PC-9 (cell line): ENCODE measurements at regions of chr14 and their contacts with region 1.

Region 1: GRCh38 chr14:80784820-80785219 is 156.7 kb downstream of the CEP128 start:
- DNase-seq: no peak
- H3K4me3 ChIP-seq: no peak overlapping the region
- H3K27ac ChIP-seq: no peak overlapping the region
- H3K4me1 ChIP-seq: no peaks in the 10 kb centered on the region
- H3K27me3 ChIP-seq: no peaks in the 10 kb centered on the region
- CTCF ChIP-seq: 0 out of 2 replicates have a peak, but pooled peaks have one; percentile 22

Region 2: DNA sequence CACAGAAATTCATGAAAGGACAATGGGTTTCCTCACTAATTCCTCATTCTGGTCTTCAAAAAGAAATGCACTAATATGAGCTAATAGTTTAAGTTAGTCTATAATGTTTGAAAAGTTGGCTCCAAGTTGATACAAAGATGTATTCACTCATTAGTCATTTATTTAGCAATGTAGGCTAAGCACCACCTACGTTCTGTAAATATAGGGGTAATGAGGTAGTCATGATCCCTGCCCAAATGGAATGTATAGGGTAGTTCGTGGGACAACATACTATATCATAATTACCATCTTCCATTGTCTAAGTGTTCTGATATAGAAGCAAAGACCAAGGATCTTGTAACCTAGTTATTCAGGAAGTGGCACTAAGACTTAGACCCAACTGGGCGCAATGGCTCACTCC is 660.0 kb before region 1 on chr14:
- CTCF ChIA-PET with region 1: no interaction called
- POLR2A ChIA-PET with region 1: interaction called, 10 read pairs
- intact Hi-C with region 1: no loop called
- DNase-seq: no peak
- H3K4me3 ChIP-seq: no peak overlapping the region
- H3K27ac ChIP-seq: no peak overlapping the region
- H3K4me1 ChIP-seq: no peaks in the 10 kb centered on the region
- H3K27me3 ChIP-seq: no peaks in the 10 kb centered on the region
- CTCF ChIP-seq: no peak

Region 3: GRCh38 chr14:80560800-80561657 is 223.8 kb before region 1 on chr14:
- CTCF ChIA-PET with region 1: no interaction called
- POLR2A ChIA-PET with region 1: no interaction called
- intact Hi-C with region 1: no loop called
- DNase-seq: no peak
- H3K4me3 ChIP-seq: no peak overlapping the region
- H3K27ac ChIP-seq: no peak overlapping the region
- H3K4me1 ChIP-seq: peaks cover 8% of the 10 kb centered on the region; the same call in 1 of the 2 replicates
- H3K27me3 ChIP-seq: no peaks in the 10 kb centered on the region
- CTCF ChIP-seq: no peak

Region 4: DNA sequence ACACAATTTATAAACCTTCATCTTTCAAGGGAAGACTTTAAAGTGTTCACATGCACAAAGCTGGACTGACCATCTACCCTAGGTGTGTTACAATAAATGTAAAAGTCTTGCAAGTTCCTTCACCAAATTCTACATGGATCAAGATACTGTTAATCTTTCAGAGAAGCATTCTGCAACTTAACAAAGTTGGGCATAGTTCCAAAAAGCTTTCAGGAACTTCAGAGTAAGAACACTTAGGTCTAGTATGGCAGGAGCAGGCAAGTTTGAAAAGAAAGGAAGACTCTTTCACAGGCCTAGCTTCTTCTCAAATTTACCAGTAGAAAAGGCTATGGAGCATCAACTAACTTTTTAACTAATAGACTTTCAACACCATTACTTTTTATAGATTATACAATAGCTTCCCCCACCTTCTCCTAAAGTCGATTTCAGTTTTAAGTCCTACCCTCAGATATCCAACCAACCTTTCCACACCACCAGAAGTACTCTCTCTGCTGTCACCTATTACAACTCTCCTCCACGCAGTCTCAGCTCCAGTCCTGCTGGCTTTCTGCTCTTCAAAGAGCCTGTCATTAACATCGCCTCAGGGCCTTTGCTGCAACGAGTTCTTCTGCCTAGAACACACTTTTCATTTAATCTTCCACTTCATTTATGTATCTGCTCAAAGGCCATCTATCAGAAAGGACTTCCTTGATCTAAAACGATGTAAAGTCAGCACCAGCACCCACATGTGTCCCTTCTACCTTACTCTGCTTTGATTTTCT is 177.2 kb before region 1 on chr14:
- CTCF ChIA-PET with region 1: no interaction called
- POLR2A ChIA-PET with region 1: no interaction called
- intact Hi-C with region 1: no loop called
- DNase-seq: no peak
- H3K4me3 ChIP-seq: no peak overlapping the region
- H3K27ac ChIP-seq: no peak overlapping the region
- H3K4me1 ChIP-seq: peaks cover 8% of the 10 kb centered on the region
- H3K27me3 ChIP-seq: no peaks in the 10 kb centered on the region
- CTCF ChIP-seq: no peak

Region 5: GRCh38 chr14:80718940-80719339 is 65.9 kb before region 1 on chr14:
- CTCF ChIA-PET with region 1: no interaction called
- POLR2A ChIA-PET with region 1: no interaction called
- intact Hi-C with region 1: no loop called
- DNase-seq: no peak
- H3K4me3 ChIP-seq: no peak overlapping the region
- H3K27ac ChIP-seq: no peak overlapping the region
- H3K4me1 ChIP-seq: no peaks in the 10 kb centered on the region
- H3K27me3 ChIP-seq: no peaks in the 10 kb centered on the region
- CTCF ChIP-seq: no peak

Region 6: GRCh38 chr14:80754696-80755095 is 30.1 kb before region 1 on chr14:
- CTCF ChIA-PET with region 1: no interaction called
- POLR2A ChIA-PET with region 1: no interaction called
- intact Hi-C with region 1: no loop called
- DNase-seq: no peak
- H3K4me3 ChIP-seq: no peak overlapping the region
- H3K27ac ChIP-seq: no peak overlapping the region
- H3K4me1 ChIP-seq: no peaks in the 10 kb centered on the region
- H3K27me3 ChIP-seq: no peaks in the 10 kb centered on the region
- CTCF ChIP-seq: no peak